Activated CD4-positive, alpha-beta T cell treated with anti-CD3 and anti-CD28 coated beads, Interleukin-2, amount 10 ng/mL, durations not matched to agents 24 days and 14 days (primary cell): ENCODE measurements at regions of chr10 and their contacts with region 1.

Region 1: DNA sequence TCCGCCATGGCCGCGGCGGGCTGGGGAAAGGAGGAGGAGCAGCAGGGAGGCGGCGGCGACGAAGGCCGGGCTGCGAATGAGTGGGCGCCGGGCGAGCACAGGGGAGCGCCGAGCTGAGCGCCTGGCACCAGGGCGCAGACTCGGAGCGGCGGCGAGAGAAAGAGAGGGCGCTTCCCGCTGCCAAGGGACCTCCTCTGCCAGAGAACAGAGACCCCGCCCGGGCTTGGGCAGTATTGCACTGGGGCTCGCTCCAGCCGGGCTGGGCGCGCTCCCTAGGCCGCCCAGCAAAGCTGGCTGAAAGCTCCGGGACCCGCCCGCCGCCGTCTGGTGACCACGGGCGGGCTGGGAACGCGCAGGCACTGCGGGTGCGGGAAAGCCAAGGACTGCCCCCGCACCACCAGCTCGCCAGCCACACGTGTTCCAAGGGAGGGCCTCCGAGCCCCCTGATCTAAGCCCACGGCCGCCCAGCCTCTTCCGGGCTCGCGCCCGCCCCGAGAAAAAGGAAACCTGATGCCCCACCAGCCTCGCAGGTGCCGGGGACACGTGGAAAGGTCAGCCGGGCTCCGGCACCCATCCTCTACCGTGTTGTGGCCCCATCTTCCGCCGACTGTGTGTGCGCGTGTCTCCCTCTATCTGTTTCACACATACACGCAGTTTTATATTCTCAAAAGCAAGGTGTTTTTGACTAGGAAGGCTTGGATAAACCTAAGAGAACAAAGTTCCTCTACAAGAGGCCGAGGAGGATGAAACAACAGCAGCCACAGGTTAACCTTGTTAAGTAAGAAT is at the start of gene CCDC6:
- DNase-seq: peak; percentile 97
- H3K4me3 Mint-ChIP-seq: peak within 1 kb of the TSS; percentile 99
- H3K27ac Mint-ChIP-seq: peak within 1 kb of the TSS; percentile 99
- H3K4me1 Mint-ChIP-seq: peaks cover 51% of the 10 kb centered on the region
- H3K27me3 Mint-ChIP-seq: no peaks in the 10 kb centered on the region
- total RNA-seq, gene CCDC6: 83.2 and 85.1 TPM in 2 replicates

Region 2: DNA sequence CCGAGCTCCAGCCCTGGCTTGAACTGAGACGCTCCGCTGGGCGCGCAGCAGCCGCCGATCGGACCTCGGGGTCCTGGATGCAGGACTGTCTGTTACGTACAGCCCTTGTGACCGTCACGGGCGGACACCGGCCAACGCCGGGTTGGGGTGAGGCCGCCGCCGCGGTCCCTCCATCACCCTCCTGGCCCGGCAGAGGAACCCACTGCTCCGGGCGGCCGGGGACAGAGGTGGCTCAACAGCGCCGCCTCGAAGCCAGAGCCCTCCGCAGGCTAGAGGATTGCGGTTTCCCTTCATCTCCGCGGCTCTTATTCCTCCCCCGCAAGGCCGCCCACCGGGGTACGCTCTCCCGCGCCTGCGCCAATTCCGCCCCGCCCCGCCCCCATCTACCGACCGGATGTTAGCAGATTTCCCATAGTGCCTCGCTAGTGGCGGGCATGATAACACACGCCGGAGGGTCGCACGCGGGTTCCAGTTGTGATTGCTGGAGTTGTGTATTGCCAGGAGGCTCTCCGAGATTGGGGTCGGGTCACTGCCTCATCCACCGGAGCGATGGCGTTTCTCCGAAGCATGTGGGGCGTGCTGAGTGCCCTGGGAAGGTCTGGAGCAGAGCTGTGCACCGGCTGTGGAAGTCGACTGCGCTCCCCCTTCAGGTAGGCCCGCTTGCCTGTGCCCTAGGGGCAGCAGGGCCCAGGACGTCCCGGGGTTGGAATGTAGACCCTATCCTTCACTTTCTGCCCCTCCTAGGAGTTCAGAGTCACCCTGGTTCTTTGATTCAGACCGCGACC is 1521.4 kb before region 1 on chr10 and contains the start of gene TFAM:
- intact Hi-C with region 1: loop called (anchors 2 kb)
- DNase-seq: peak; percentile 98
- H3K4me3 Mint-ChIP-seq: peak within 1 kb of the TSS; percentile 92
- H3K27ac Mint-ChIP-seq: peak within 1 kb of the TSS; percentile 96
- H3K4me1 Mint-ChIP-seq: peaks cover 27% of the 10 kb centered on the region
- H3K27me3 Mint-ChIP-seq: peaks cover 2% of the 10 kb centered on the region
- total RNA-seq, gene TFAM: 102 and 108 TPM in 2 replicates

Region 3: GRCh38 chr10:59808896-59809643 is 97.5 kb before region 1 on chr10:
- intact Hi-C with region 1: loop called (anchors 1 kb)
- DNase-seq: peak; percentile 91
- H3K4me3 Mint-ChIP-seq: no peak overlapping the region
- H3K27ac Mint-ChIP-seq: no peak overlapping the region
- H3K4me1 Mint-ChIP-seq: peaks cover 9% of the 10 kb centered on the region
- H3K27me3 Mint-ChIP-seq: no peaks in the 10 kb centered on the region

Region 4: DNA sequence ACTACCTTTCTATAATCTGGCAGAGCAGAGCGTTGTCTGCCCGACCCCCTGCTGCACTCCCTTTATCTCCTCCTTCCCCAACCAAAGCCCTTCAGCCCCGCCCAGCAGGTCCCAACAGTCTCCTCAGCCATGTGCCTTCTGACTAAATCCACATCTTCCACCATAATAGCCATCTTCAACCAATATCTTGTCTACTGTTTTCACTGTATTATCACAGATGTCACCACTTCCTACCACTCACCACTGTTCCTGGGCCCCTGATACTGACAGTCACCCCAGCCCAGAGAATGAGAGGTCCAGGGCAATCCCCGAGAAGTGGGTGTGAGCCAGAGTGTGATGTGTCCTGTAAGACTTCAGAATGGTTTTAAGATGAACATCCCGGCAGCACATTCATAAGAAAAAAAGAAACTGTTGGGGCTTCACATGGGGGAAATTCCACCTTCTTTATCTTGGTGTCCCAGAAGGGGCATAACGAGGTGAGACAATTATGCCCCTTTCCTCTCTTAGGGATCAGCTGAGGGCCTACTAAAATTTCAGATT is 25.6 kb before region 1 on chr10:
- intact Hi-C with region 1: loop called (anchors 1 kb)
- DNase-seq: peak; percentile 87
- H3K4me3 Mint-ChIP-seq: peak overlapping the region; percentile 69
- H3K27ac Mint-ChIP-seq: peak overlapping the region; percentile 92
- H3K4me1 Mint-ChIP-seq: peaks cover 74% of the 10 kb centered on the region
- H3K27me3 Mint-ChIP-seq: no peaks in the 10 kb centered on the region

Region 5: GRCh38 chr10:60032723-60033122 is 126.1 kb after region 1 on chr10:
- intact Hi-C with region 1: loop called (anchors 2 kb)
- DNase-seq: peak; percentile 79
- H3K4me3 Mint-ChIP-seq: no peak overlapping the region
- H3K27ac Mint-ChIP-seq: no peak overlapping the region
- H3K4me1 Mint-ChIP-seq: peaks cover 6% of the 10 kb centered on the region
- H3K27me3 Mint-ChIP-seq: no peaks in the 10 kb centered on the region